Heart left ventricle (tissue), 16 donors: ENCODE measurements at regions of chr20 and their contacts with region 1.

Region 1: DNA sequence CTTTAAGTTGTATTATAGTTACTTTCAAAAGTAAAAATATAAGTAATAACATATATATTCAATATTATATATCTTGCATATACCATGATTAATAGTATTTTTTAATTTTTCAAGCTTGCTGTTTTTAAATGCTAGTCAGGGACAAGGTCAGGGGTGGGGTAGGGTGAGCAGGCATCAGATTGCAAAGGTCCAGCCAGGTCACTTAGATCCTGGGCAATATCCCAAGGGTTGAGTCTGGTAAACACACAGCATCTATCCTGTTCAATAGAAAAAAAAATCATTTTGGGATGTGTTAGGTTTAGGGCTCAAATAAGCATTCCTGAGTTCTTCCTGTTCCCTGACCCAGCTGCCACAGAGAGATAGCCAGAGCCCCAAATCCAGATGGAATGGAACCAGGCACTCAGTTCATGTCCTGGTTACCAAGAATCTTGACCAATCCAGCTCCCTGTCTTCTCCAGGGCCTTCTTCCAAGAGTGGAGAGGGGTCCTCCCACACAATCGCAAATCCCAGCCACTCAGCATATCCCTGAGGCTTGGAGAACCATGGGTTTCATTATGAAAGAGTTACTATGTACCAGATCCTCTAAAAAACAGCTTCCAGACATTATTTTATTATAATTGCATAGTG is 134.9 kb upstream of the TOP1 start:
- DNase-seq: no peak
- ATAC-seq: peak in 3 of 4 donors; percentile 18 to 53 (median 37)
- H3K4me3 ChIP-seq: no peak overlapping the region
- H3K27ac ChIP-seq: no peak overlapping the region
- H3K4me1 ChIP-seq: peaks cover 0 to 14% (median 0%) of the 10 kb centered on the region in 12 donors
- H3K27me3 ChIP-seq: peaks cover 0 to 7% (median 0%) of the 10 kb centered on the region in 9 donors
- CTCF ChIP-seq: no peak
- POLR2A ChIP-seq: no peak

Region 2: DNA sequence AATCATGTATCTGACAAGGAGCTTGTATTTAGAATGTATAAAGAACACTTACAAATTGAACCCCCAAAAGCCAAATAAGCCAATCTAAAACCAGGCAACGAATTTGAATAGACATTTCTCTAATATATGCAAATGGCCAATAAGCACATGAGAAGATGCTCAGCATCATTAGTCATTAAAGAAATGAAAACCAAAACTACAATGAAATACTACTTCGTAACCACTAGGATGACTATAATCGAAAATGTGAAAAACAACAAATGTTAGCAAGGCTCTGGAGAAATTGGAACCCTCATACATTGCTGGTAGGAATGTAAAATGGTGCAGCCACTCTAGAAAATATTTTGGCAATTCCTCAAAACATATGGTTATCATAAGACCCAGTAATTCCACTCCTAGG is 29.1 kb after region 1 on chr20:
- intact Hi-C with region 1: loop called in 1 of 10 experiments (anchors 2 kb)
- DNase-seq: no peak
- ATAC-seq: no peak
- H3K4me3 ChIP-seq: no peak overlapping the region
- H3K27ac ChIP-seq: no peak overlapping the region
- H3K4me1 ChIP-seq: no peaks in the 10 kb centered on the region
- H3K27me3 ChIP-seq: no peaks in the 10 kb centered on the region
- CTCF ChIP-seq: no peak
- POLR2A ChIP-seq: no peak